ENCODE measurements at regions of chr5 and their contacts with region 1.

Region 1: GRCh38 chr5:103428411-103428871 is 134.1 kb downstream of the NUDT12 start:
- DNase-seq: peak; percentile 70
- H3K4me3 ChIP-seq: no peak overlapping the region
- H3K27ac ChIP-seq: no peak overlapping the region
- H3K4me1 ChIP-seq: peaks cover 6% of the 10 kb centered on the region
- H3K27me3 ChIP-seq: no peaks in the 10 kb centered on the region
- CTCF ChIP-seq: no peak

Region 2: DNA sequence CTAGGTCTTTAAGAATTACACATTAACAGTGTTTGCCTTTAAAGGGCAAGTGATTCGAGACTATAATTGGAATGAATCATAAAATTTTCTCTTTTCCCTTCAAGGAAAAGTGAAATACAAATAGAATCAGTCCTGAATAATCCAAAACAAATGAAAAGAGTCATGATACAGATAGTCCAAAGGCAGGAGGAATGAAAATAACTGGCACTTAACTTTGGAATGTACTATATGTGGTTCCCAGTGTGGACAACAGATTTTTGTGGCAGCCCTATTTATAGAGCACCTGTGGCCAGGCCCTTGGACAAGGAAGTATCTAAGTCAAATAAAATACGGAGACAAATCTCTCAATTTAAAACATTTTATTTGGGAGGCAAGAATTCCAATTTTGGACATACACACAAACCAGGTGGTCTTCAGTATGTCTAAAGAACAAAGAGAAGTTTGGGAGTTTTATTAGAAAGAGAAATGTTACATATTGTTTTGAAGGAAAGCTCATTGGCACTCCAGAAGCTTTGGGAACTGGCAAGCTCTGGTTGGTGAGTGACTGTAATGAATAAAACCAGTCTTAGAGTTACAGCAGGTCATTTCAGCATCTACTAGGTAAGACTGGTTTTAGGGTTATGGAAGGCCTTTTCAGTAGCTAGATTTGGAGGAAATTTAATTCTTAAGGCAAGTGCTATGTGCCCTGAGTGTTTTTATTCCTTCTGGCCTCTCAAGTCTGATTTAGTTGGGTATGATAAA is 789.4 kb before region 1 on chr5:
- CTCF ChIA-PET with region 1: no interaction called
- POLR2A ChIA-PET with region 1: no interaction called
- intact Hi-C with region 1: no loop called
- DNase-seq: no peak
- H3K4me3 ChIP-seq: no peak overlapping the region
- H3K27ac ChIP-seq: no peak overlapping the region
- H3K4me1 ChIP-seq: no peaks in the 10 kb centered on the region
- H3K27me3 ChIP-seq: no peaks in the 10 kb centered on the region
- CTCF ChIP-seq: no peak

Region 3: GRCh38 chr5:103358305-103358995 is 70.0 kb before region 1 on chr5:
- CTCF ChIA-PET with region 1: no interaction called
- POLR2A ChIA-PET with region 1: no interaction called
- intact Hi-C with region 1: loop called (anchors 2 kb)
- DNase-seq: peak; percentile 61
- H3K4me3 ChIP-seq: peak overlapping the region; percentile 17
- H3K27ac ChIP-seq: peak overlapping the region; percentile 64
- H3K4me1 ChIP-seq: peaks cover 55% of the 10 kb centered on the region
- H3K27me3 ChIP-seq: no peaks in the 10 kb centered on the region
- CTCF ChIP-seq: no peak